ENCODE measurements at regions of chr11 and their contacts with region 1.

Region 1: DNA sequence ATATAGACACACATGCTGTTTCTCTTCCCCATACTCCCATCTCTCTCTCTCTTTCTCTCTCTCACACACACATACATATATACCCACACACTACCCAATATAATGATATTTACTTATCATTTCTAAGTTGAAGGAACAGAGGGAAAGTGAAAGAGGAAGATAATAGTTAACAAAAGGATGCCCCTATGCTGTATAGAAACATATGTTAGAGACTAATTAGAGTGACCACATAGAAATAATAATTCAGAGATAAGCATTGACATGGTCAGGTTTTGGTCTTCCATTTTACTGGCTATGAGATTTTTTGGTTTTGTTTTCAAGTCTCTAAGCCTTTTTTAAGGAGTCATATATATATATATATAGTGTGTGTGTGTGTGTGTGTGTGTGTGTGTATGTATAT is 445.7 kb upstream of the CHORDC1 start:
- DNase-seq: no peak
- ATAC-seq: no peak
- H3K4me3 Mint-ChIP-seq: no peak overlapping the region
- H3K27ac Mint-ChIP-seq: no peak overlapping the region
- H3K4me1 Mint-ChIP-seq: 0 out of 2 replicates have a peak, but pooled peaks cover 5% of the 10 kb centered on the region
- H3K27me3 Mint-ChIP-seq: no peaks in the 10 kb centered on the region
- CTCF ChIP-seq: no peak

Region 2: GRCh38 chr11:90241414-90241813 is 427.1 kb before region 1 on chr11:
- CTCF ChIA-PET with region 1: no interaction called
- POLR2A ChIA-PET with region 1: interaction called, 10 read pairs
- DNase-seq: no peak
- ATAC-seq: no peak
- H3K4me3 Mint-ChIP-seq: no peak overlapping the region
- H3K27ac Mint-ChIP-seq: no peak overlapping the region
- H3K4me1 Mint-ChIP-seq: peaks cover 54% of the 10 kb centered on the region
- H3K27me3 Mint-ChIP-seq: no peaks in the 10 kb centered on the region; the same call in 1 of the 2 replicates
- CTCF ChIP-seq: no peak

Region 3: GRCh38 chr11:90656171-90656570 is 12.3 kb before region 1 on chr11:
- CTCF ChIA-PET with region 1: no interaction called
- POLR2A ChIA-PET with region 1: no interaction called
- DNase-seq: no peak
- ATAC-seq: 0 out of 2 replicates have a peak, but pooled peaks have one; percentile 48
- H3K4me3 Mint-ChIP-seq: no peak overlapping the region
- H3K27ac Mint-ChIP-seq: no peak overlapping the region
- H3K4me1 Mint-ChIP-seq: peaks cover 4% of the 10 kb centered on the region
- H3K27me3 Mint-ChIP-seq: no peaks in the 10 kb centered on the region
- CTCF ChIP-seq: no peak

Measured in WTC11 (cell line).